Heart left ventricle (tissue), 16 donors: ENCODE measurements at regions of chr16 and their contacts with region 1.

Region 1: DNA sequence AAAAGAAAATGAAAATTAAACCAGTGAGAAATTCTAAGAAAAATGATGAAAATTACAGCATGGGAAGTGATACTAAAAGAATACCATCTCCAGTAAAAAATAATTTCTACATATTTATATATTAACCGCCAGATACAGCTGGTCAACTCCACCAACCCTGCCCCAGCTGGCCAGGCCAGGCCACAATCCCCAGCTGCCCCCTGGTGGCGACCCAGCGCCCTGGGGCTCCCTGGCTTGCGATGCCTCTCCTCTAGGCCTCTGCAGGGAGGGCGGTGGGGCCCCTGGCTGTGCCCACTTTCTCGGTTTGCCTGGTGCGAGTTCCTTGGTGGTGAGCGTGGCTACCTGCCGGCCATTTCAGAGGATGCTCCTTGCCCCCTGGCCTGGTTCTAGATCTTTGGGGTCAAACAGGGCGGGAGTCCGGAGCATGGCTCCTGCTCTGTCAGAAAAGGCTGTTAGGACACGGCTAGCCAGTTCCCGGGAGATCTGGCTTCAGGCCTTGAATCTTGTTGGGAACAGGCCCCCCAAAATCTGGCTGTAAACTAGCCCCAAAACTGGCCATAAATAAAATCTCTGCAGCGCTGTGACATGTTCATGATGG is 14.5 kb downstream of the GLIS2 start:
- DNase-seq: peak; percentile 84 to 93 (median 85)
- ATAC-seq: peak; percentile 52 to 66 (median 60)
- H3K4me3 ChIP-seq: no peak overlapping the region
- H3K27ac ChIP-seq: peak overlapping the region in 7 of 12 donors; percentile 80 to 98 (median 95)
- H3K4me1 ChIP-seq: peaks cover 6 to 54% (median 41%) of the 10 kb centered on the region in 12 donors
- H3K27me3 ChIP-seq: no peaks in the 10 kb centered on the region
- CTCF ChIP-seq: peak; percentile 95 to 100 (median 97)
- POLR2A ChIP-seq: no peak

Region 2: GRCh38 chr16:4200000-4200780 is 130.2 kb before region 1 on chr16:
- intact Hi-C with region 1: loop called in 6 of 10 experiments (anchors 5 to 10 kb)
- DNase-seq: peak; percentile 48 to 82 (median 60)
- ATAC-seq: peak; percentile 60 to 80 (median 68)
- H3K4me3 ChIP-seq: no peak overlapping the region
- H3K27ac ChIP-seq: peak overlapping the region in 3 of 12 donors; percentile 4 to 17 (median 7)
- H3K4me1 ChIP-seq: peaks cover 0 to 18% (median 6%) of the 10 kb centered on the region in 12 donors
- H3K27me3 ChIP-seq: no peaks in the 10 kb centered on the region
- CTCF ChIP-seq: peak; percentile 52 to 75 (median 66)
- POLR2A ChIP-seq: no peak

Region 3: GRCh38 chr16:4271176-4272066 is 59.0 kb before region 1 on chr16:
- intact Hi-C with region 1: loop called in 3 of 10 experiments (anchors 5 kb)
- DNase-seq: peak; percentile 92 to 96 (median 94)
- ATAC-seq: peak; percentile 89 to 93 (median 90)
- H3K4me3 ChIP-seq: peak overlapping the region; percentile 64 to 93 (median 86)
- H3K27ac ChIP-seq: peak overlapping the region; percentile 62 to 97 (median 92)
- H3K4me1 ChIP-seq: peaks cover 0 to 28% (median 13%) of the 10 kb centered on the region in 12 donors
- H3K27me3 ChIP-seq: no peaks in the 10 kb centered on the region
- CTCF ChIP-seq: peak in 5 of 12 donors; percentile 9 to 29 (median 28)
- POLR2A ChIP-seq: peak in 1 of 2 donors; percentile 68

Region 4: DNA sequence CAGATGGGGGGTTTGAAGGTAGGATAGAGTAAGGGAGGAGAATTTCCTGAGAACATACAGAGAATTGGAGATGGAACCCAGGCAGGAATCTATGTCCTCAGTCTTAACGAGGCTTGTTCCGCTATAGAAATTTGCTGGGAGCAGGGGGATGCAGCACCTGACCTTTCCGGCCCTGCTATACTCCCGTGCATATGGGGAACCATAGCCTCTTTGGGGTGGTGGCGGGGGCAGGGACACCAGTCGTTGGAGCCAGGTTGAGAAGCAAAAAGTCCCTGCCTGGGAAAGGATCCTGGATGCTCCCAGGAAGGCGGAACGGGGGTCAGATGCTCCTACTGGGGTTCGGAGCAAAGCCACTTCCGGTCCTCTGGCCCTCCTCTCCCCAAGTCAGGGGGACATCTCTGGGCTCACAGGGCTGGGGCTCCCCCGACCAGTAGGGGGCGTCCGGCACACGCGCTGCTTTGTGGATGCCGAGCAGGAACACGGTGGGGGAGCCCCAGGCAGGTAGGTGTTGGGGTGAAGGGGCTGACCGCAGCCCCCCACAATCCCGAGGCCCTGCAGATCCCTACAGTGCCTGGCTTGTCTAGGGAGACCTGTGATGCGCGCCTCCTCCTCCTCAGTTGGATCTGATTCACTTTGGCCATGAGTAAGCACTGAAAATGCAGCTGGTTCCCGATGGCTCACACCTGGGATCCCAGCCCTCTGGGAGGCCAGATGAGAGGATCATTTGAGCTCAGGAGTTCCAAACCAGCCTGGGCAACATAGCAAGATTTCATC is 42.0 kb before region 1 on chr16:
- intact Hi-C with region 1: loop called (anchors 1 to 5 kb)
- DNase-seq: peak; percentile 73 to 91 (median 78)
- ATAC-seq: peak in 3 of 4 donors; percentile 78 to 81 (median 78)
- H3K4me3 ChIP-seq: peak overlapping the region in 1 of 12 donors; percentile 13
- H3K27ac ChIP-seq: no peak overlapping the region
- H3K4me1 ChIP-seq: peaks cover 5 to 25% (median 17%) of the 10 kb centered on the region in 12 donors
- H3K27me3 ChIP-seq: peaks cover 0 to 3% (median 0%) of the 10 kb centered on the region in 9 donors
- CTCF ChIP-seq: peak; percentile 91 to 99 (median 96)
- POLR2A ChIP-seq: no peak

Region 5: DNA sequence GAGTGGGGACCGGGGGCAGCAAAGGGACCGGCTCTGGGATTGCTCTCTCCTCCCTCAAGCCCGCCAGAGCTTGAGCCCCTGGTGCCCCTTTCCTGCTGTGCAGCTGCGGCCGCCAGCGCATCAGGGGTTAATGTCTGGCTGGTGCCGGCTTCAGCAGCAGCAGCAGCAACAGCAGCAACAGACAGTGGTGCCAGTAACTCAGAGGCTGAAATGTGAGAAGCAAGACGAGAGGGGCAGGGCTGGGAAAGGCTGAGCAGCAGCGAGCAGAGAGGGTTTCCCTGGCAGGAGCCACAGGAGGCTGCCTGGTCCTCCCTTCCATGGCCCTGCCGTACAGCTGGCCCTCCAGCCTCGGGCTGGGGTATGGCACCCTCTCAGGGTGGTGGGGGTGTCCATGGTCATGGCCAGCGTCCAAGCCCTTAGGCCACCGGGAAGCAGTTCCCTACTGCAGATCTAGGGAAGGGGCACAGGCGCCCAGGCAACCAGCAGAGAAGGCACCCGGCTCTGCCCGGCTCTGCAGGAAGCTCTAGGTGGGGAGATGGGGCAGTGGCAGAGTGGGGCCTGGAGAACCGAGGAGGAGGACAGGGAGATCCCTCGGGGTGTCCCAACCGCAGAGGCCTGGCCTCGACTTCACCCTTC is 36.4 kb before region 1 on chr16:
- intact Hi-C with region 1: loop called in 8 of 10 experiments (anchors 2 to 5 kb)
- DNase-seq: peak in 4 of 5 donors; percentile 52 to 75 (median 66)
- ATAC-seq: peak; percentile 74 to 91 (median 79)
- H3K4me3 ChIP-seq: peak overlapping the region in 5 of 12 donors; percentile 13 to 22 (median 14)
- H3K27ac ChIP-seq: peak overlapping the region in 9 of 12 donors; percentile 6 to 56 (median 30)
- H3K4me1 ChIP-seq: peaks cover 0 to 35% (median 26%) of the 10 kb centered on the region in 12 donors
- H3K27me3 ChIP-seq: no peaks in the 10 kb centered on the region
- CTCF ChIP-seq: no peak
- POLR2A ChIP-seq: no peak

Region 6: DNA sequence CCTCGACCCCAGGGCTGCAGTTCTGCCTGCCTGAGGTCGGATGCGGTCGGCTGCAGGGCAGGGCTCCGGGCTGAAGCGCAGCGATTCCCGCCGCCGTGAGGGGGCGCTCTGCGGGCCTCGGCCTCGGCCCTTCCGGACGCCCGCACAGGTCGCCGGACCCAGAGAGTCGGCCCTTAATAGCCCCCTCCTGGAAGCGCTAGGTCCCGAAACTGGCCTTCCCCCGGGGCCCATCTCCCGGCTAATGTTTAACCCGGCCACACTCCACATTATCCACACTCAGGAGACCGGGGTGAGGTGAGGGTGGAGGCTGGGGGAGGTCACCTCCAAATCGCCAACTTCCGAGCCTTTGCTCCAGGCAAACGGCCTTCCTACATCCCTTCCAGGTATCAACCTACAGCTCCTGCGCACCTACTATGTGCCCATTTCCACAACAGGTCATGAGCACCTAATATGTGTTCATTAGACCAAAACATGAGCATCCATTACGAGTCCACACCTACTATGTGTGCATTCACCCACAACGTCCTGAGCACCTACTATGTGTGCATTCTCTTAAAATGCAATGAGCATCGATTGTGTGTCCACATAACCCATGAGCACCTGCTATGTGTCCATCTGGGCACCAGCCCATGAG is 16.4 kb before region 1 on chr16:
- intact Hi-C with region 1: loop called in 2 of 10 experiments (anchors 1 to 2 kb)
- DNase-seq: no peak
- ATAC-seq: peak in 1 of 4 donors; percentile 2
- H3K4me3 ChIP-seq: peak overlapping the region in 1 of 12 donors; percentile 9
- H3K27ac ChIP-seq: peak overlapping the region in 1 of 12 donors; percentile 96
- H3K4me1 ChIP-seq: peaks cover 4 to 55% (median 37%) of the 10 kb centered on the region in 12 donors
- H3K27me3 ChIP-seq: peaks cover 0 to 32% (median 0%) of the 10 kb centered on the region in 9 donors
- CTCF ChIP-seq: peak; percentile 39 to 79 (median 58)
- POLR2A ChIP-seq: no peak